IMR-90 (cell line): ENCODE measurements at regions of chr11 and their contacts with region 1.

Region 1: GRCh38 chr11:19071255-19071654 is 10.7 kb upstream of the MRGPRX2 start:
- DNase-seq: peak; percentile 82
- ATAC-seq: peak; percentile 99
- H3K4me3 ChIP-seq: peak overlapping the region; percentile 26; the same call in 1 of the 2 replicates
- H3K27ac ChIP-seq: no peak overlapping the region
- H3K4me1 ChIP-seq: no peaks in the 10 kb centered on the region
- H3K27me3 ChIP-seq: peaks cover 18% of the 10 kb centered on the region
- CTCF ChIP-seq: peak; percentile 100
- POLR2A ChIP-seq: no peak
- RAD21 ChIP-seq: peak; percentile 89

Region 2: GRCh38 chr11:19259487-19260345 is 188.5 kb after region 1 on chr11:
- CTCF ChIA-PET with region 1: interaction called, 3 read pairs
- POLR2A ChIA-PET with region 1: no interaction called
- dilution Hi-C with region 1: no loop called
- in situ Hi-C with region 1: no loop called
- intact Hi-C with region 1: loop called (anchors 1 kb)
- DNase-seq: peak; percentile 54
- ATAC-seq: peak; percentile 99
- H3K4me3 ChIP-seq: no peak overlapping the region
- H3K27ac ChIP-seq: no peak overlapping the region
- H3K4me1 ChIP-seq: no peaks in the 10 kb centered on the region
- H3K27me3 ChIP-seq: peaks cover 22% of the 10 kb centered on the region
- CTCF ChIP-seq: peak; percentile 90
- POLR2A ChIP-seq: no peak
- RAD21 ChIP-seq: peak; percentile 75

Region 3: GRCh38 chr11:19311308-19312030 is 240.2 kb after region 1 on chr11:
- CTCF ChIA-PET with region 1: no interaction called
- POLR2A ChIA-PET with region 1: no interaction called
- dilution Hi-C with region 1: no loop called
- in situ Hi-C with region 1: no loop called
- intact Hi-C with region 1: loop called (anchors 5 kb)
- DNase-seq: peak; percentile 50
- ATAC-seq: peak; percentile 100
- H3K4me3 ChIP-seq: no peak overlapping the region
- H3K27ac ChIP-seq: no peak overlapping the region
- H3K4me1 ChIP-seq: no peaks in the 10 kb centered on the region
- H3K27me3 ChIP-seq: peaks cover 45% of the 10 kb centered on the region
- CTCF ChIP-seq: peak; percentile 88
- POLR2A ChIP-seq: no peak
- RAD21 ChIP-seq: peak; percentile 83